ENCODE measurements at regions of chr10 and their contacts with region 1.

Region 1: DNA sequence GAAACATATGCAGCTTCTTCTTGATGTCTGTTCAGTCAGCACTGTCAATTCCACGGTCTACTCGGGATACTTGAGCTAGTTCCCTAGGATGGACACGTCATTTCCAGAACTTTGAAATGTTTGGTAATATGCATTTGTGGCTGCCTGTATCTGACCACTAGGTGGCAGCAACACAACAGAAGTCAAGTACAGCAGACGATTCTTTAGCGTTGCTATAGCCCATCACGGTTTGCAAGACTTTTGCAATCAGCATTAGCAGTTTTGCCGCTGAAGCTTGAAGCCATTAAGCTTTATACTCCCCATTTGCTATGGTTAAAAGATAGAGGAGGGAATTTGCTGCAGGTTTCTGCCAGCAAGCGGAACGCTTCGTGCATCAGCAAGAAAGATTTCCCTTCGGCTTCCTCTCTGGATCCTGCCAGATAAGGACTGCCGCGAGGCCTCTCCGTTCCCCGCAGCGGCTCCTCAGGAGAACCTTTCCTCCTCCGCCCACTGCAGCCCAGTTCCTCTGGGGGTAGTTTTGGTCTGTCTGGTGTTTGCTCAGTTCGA is 63.5 kb downstream of the ABCC2 start:
- DNase-seq: peak; percentile 86
- ATAC-seq: peak; percentile 89
- H3K4me3 ChIP-seq: no peak overlapping the region
- H3K27ac ChIP-seq: 0 out of 2 replicates have a peak overlapping the region, but pooled peaks have one; percentile 2
- H3K4me1 ChIP-seq: no peaks in the 10 kb centered on the region
- H3K27me3 ChIP-seq: no peaks in the 10 kb centered on the region
- CTCF ChIP-seq: peak; percentile 95 to 100 (median 97)
- POLR2A ChIP-seq: no peak
- RAD21 ChIP-seq: peak; percentile 99

Region 2: DNA sequence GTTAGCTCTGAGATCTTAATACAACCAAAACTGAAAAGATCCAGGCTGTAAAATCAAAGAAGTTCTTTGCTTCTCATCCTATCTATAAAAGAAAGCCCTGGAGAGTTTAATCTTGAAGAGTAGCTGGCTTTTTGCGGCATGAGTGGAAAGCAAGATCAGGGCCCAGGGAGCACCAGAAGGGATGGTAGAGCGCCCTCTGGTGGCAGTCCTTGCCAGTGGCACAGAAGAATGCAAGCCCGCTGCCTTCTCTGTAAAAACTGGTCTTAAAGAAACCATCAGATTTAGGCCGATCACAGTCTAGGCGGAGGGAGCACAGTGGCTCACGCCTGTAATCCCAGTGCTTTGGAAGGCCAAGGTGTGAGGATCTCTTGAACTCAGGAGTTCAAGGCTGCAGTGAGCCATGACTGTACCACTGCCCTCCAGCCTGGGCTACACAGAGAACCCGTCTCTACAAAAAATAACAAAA is 200.1 kb after region 1 on chr10:
- CTCF ChIA-PET with region 1: interaction called, 68 read pairs
- POLR2A ChIA-PET with region 1: interaction called, 3 read pairs
- RAD21 ChIA-PET with region 1: interaction called, 5 to 6 read pairs
- intact Hi-C with region 1: loop called (anchors 1 kb)
- DNase-seq: peak; percentile 86
- ATAC-seq: peak; percentile 81
- H3K4me3 ChIP-seq: no peak overlapping the region
- H3K27ac ChIP-seq: peak overlapping the region; percentile 6; the same call in 1 of the 2 replicates
- H3K4me1 ChIP-seq: peaks cover 35 to 41% of the 10 kb centered on the region in 2 experiments
- H3K27me3 ChIP-seq: no peaks in the 10 kb centered on the region
- CTCF ChIP-seq: peak in 2 of 3 experiments; percentile 99; a peak in 4 of 6 replicates
- POLR2A ChIP-seq: no peak
- RAD21 ChIP-seq: no peak

Region 3: GRCh38 chr10:100185364-100186252 is 339.7 kb after region 1 on chr10 and contains the start of gene ERLIN1:
- CTCF ChIA-PET with region 1: no interaction called
- POLR2A ChIA-PET with region 1: no interaction called
- RAD21 ChIA-PET with region 1: no interaction called
- intact Hi-C with region 1: loop called (anchors 5 kb)
- DNase-seq: peak; percentile 80
- ATAC-seq: peak; percentile 91
- H3K4me3 ChIP-seq: peak within 1 kb of the TSS; percentile 73 to 82
- H3K27ac ChIP-seq: peak within 1 kb of the TSS; percentile 84
- H3K4me1 ChIP-seq: peaks cover 12 to 23% of the 10 kb centered on the region in 2 experiments; a peak in 3 of 4 replicates
- H3K27me3 ChIP-seq: no peaks in the 10 kb centered on the region
- CTCF ChIP-seq: 0 out of 6 replicates have a peak, but pooled peaks of 1 of the 3 experiments have one; percentile 23
- POLR2A ChIP-seq: peak; percentile 92
- RAD21 ChIP-seq: no peak
- total RNA-seq, gene ERLIN1: 64.5 TPM

Region 4: DNA sequence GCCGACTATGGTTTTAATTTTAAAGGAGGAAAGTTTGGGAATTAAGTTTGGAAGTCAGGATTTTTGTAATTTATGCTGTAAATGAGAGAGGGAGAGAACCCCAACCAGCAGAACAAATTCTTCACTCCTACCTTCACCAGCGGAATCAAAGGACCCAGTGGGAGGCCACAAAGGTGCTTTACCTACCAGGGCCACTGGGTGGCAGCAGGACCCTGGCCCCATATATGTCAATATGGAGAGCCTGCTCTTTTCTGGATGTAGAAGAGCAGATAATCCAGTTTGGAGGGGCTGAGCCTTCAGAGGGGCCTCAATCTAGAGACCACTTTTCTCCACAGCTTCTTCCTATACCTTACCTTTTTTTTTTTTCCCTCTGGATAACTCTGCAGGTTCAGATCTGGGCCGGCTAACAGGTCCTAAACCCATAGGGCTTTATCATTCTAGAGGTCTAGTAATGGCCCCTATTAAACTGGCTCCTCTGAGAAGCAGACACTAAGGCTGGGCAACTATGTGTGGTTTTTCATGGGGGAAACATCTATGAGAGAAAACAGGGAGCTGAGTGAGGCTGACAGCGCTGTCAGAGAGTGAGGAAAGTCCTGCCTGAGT is 492.6 kb after region 1 on chr10:
- CTCF ChIA-PET with region 1: interaction called, 4 read pairs
- POLR2A ChIA-PET with region 1: no interaction called
- RAD21 ChIA-PET with region 1: no interaction called
- intact Hi-C with region 1: loop called (anchors 5 kb)
- DNase-seq: peak; percentile 56
- ATAC-seq: peak; percentile 74
- H3K4me3 ChIP-seq: no peak overlapping the region
- H3K27ac ChIP-seq: no peak overlapping the region; the same call in 1 of the 2 replicates
- H3K4me1 ChIP-seq: peaks cover 3 to 10% of the 10 kb centered on the region in 2 experiments; a peak in 3 of 4 replicates
- H3K27me3 ChIP-seq: 0 out of 2 replicates have a peak, but pooled peaks cover 3% of the 10 kb centered on the region
- CTCF ChIP-seq: peak in 2 of 3 experiments; percentile 99; a peak in 4 of 6 replicates
- POLR2A ChIP-seq: no peak
- RAD21 ChIP-seq: no peak

Measured in HCT116 (cell line).